CD14-positive monocyte (primary cell): ENCODE measurements at regions of chr3 and their contacts with region 1.

Region 1: GRCh38 chr3:183766745-183767606 is 58.4 kb downstream of the MAP6D1 start:
- DNase-seq: peak; percentile 39 to 63 (median 63)
- H3K4me3 ChIP-seq: no peak overlapping the region
- H3K4me3 Mint-ChIP-seq: no peak overlapping the region
- H3K27ac ChIP-seq: peak overlapping the region in 1 of 2 donors; percentile 40
- H3K27ac Mint-ChIP-seq: peak overlapping the region in 2 of 7 donors; percentile 6 to 48
- H3K4me1 ChIP-seq: peaks cover 11 to 14% of the 10 kb centered on the region in 2 donors
- H3K4me1 Mint-ChIP-seq: peaks cover 16% of the 10 kb centered on the region
- H3K27me3 ChIP-seq: no peaks in the 10 kb centered on the region
- H3K27me3 Mint-ChIP-seq: no peaks in the 10 kb centered on the region
- CTCF ChIP-seq: peak; percentile 86

Region 2: GRCh38 chr3:183468424-183468823 is 298.6 kb before region 1 on chr3:
- intact Hi-C with region 1: loop called (anchors 2 to 5 kb)
- DNase-seq: no peak
- H3K4me3 ChIP-seq: no peak overlapping the region
- H3K4me3 Mint-ChIP-seq: no peak overlapping the region
- H3K27ac ChIP-seq: no peak overlapping the region
- H3K27ac Mint-ChIP-seq: no peak overlapping the region
- H3K4me1 ChIP-seq: peaks cover 4 to 11% of the 10 kb centered on the region in 2 donors
- H3K4me1 Mint-ChIP-seq: peaks cover 3% of the 10 kb centered on the region
- H3K27me3 ChIP-seq: no peaks in the 10 kb centered on the region
- H3K27me3 Mint-ChIP-seq: peaks cover 0 to 2% (median 1%) of the 10 kb centered on the region in 3 donors
- CTCF ChIP-seq: no peak

Region 3: DNA sequence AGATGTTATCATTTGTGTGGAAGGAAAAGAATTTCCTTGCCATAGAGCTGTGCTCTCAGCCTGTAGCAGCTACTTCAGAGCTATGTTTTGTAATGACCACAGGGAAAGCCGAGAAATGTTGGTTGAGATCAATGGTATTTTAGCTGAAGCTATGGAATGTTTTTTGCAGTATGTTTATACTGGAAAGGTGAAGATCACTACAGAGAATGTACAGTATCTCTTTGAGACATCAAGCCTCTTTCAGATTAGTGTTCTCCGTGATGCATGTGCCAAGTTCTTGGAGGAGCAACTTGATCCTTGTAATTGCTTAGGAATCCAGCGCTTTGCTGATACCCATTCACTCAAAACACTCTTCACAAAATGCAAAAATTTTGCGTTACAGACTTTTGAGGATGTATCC is 116.4 kb before region 1 on chr3:
- intact Hi-C with region 1: no loop called
- DNase-seq: no peak
- H3K4me3 ChIP-seq: no peak overlapping the region
- H3K4me3 Mint-ChIP-seq: no peak overlapping the region
- H3K27ac ChIP-seq: no peak overlapping the region
- H3K27ac Mint-ChIP-seq: no peak overlapping the region
- H3K4me1 ChIP-seq: no peaks in the 10 kb centered on the region
- H3K4me1 Mint-ChIP-seq: no peaks in the 10 kb centered on the region
- H3K27me3 ChIP-seq: no peaks in the 10 kb centered on the region
- H3K27me3 Mint-ChIP-seq: no peaks in the 10 kb centered on the region
- CTCF ChIP-seq: no peak